ENCODE measurements at regions of chr15 and their contacts with region 1.

Region 1: GRCh38 chr15:101652098-101652782 is at the start of gene TM2D3:
- DNase-seq: peak; percentile 77 to 92
- H3K4me3 ChIP-seq: peak within 1 kb of the TSS; percentile 94
- H3K27ac ChIP-seq: peak within 1 kb of the TSS; percentile 76
- H3K4me1 ChIP-seq: peaks cover 23% of the 10 kb centered on the region
- H3K27me3 ChIP-seq: no peaks in the 10 kb centered on the region
- CTCF ChIP-seq: peak; percentile 76
- total RNA-seq, gene TM2D3: 18.8 and 21.7 TPM in 2 replicates

Region 2: DNA sequence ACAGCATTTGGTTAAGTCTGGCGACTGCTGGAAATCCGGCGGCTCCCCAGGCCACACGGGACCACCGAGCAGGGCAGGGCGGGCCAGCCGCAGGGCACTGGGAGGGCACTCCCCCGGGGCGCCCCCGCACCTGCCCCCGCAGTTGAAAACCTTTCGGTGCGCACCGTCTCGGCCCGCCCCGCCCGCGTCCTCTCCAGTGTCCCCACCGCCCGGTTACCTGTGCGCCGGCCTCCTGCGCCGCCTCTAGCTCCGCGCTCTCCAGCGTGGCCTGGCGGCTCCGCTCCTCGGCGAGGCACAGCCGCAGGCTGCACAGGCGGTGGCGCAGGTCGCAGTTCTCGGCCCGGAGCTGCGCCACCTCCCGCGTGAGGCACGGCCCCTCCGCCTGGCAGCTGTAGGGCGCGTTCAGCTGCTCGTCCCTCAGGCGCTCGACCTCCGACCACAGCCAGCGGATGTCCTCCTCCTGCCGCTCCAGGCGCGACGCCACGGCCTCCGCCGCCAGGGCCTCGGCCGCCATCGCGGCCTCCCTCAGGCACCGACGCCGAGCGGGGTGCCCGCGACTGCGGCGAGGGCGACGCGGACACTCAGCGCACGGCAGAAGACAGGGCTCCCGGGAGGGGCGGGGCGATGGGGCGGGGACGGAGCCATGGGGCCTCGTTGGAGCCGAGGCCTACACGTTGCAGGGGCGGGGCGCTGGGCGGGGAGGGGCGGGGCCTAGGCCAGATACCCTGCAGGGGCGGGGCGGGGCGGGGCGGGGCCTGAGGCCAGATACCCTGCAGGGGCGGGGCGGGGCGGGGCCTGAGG is 71.8 kb after region 1 on chr15 and contains the start of gene TARS3:
- CTCF ChIA-PET with region 1: no interaction called
- POLR2A ChIA-PET with region 1: no interaction called
- intact Hi-C with region 1: loop called (anchors 5 kb)
- DNase-seq: peak; percentile 69 to 87
- H3K4me3 ChIP-seq: peak within 1 kb of the TSS; percentile 78
- H3K27ac ChIP-seq: peak within 1 kb of the TSS; percentile 50
- H3K4me1 ChIP-seq: peaks cover 9% of the 10 kb centered on the region; the same call in 1 of the 2 replicates
- H3K27me3 ChIP-seq: peaks cover 19% of the 10 kb centered on the region
- CTCF ChIP-seq: no peak
- total RNA-seq, gene TARS3: 4.6 and 5.6 TPM in 2 replicates

Measured in PC-9 (cell line).